ENCODE measurements at regions of chr11 and their contacts with region 1.

Region 1: GRCh38 chr11:62875698-62876478 is 4.8 kb upstream of the SLC3A2 start:
- DNase-seq: no peak
- ATAC-seq: no peak
- H3K4me3 ChIP-seq: no peak overlapping the region
- H3K4me3 Mint-ChIP-seq: no peak overlapping the region
- H3K27ac ChIP-seq: no peak overlapping the region
- H3K27ac Mint-ChIP-seq: no peak overlapping the region
- H3K4me1 ChIP-seq: peaks cover 2 to 12% of the 10 kb centered on the region in 2 experiments
- H3K4me1 Mint-ChIP-seq: peaks cover 11 to 19% (median 12%) of the 10 kb centered on the region in 3 donors
- H3K27me3 ChIP-seq: no peaks in the 10 kb centered on the region
- H3K27me3 Mint-ChIP-seq: no peaks in the 10 kb centered on the region

Region 2: DNA sequence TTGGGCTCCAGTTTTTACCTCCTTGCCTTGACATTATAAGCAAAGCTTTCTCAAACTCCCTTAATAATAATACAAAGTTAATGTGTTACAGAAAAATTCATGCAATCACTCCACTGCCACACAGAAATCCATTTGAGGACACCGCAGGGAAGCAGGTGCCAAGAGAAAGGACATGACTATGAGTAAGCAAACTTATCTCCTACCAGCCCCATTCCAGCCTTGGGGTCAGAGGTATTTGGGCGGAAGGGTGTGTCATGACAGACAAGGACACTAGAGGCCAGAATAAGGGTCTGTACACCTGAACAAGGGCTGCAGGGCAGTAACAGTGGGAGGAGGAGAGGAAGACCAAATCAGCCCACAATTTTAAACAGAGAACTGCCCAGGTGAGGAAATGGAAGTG is 162.5 kb before region 1 on chr11:
- CTCF ChIA-PET with region 1: interaction called in 1 of 2 experiments, 6 read pairs
- POLR2A ChIA-PET with region 1: interaction called, 3 to 10 read pairs
- DNase-seq: no peak
- ATAC-seq: no peak
- H3K4me3 ChIP-seq: no peak overlapping the region
- H3K4me3 Mint-ChIP-seq: no peak overlapping the region
- H3K27ac ChIP-seq: peak overlapping the region; percentile 18
- H3K27ac Mint-ChIP-seq: peak overlapping the region; percentile 84 to 89
- H3K4me1 ChIP-seq: peaks cover 8 to 19% of the 10 kb centered on the region in 2 experiments
- H3K4me1 Mint-ChIP-seq: peaks cover 57 to 68% (median 58%) of the 10 kb centered on the region in 3 donors
- H3K27me3 ChIP-seq: no peaks in the 10 kb centered on the region
- H3K27me3 Mint-ChIP-seq: no peaks in the 10 kb centered on the region

Measured in T-cell (primary cell).